Adrenal gland (tissue), 19 donors: ENCODE measurements at regions of chr6 and their contacts with region 1.

Region 1: GRCh38 chr6:127302728-127303660 is 36.3 kb downstream of the RNF146 start:
- DNase-seq: peak; percentile 15 to 69 (median 28)
- H3K4me3 ChIP-seq: no peak overlapping the region
- H3K27ac ChIP-seq: no peak overlapping the region
- H3K4me1 ChIP-seq: peaks cover 0 to 10% of the 10 kb centered on the region in 2 donors
- H3K27me3 ChIP-seq: no peaks in the 10 kb centered on the region
- CTCF ChIP-seq: peak; percentile 49 to 75 (median 70)
- POLR2A ChIP-seq: no peak

Region 2: GRCh38 chr6:127547215-127547614 is 244.2 kb after region 1 on chr6:
- intact Hi-C with region 1: loop called (anchors 10 kb)
- DNase-seq: no peak
- H3K4me3 ChIP-seq: no peak overlapping the region
- H3K27ac ChIP-seq: no peak overlapping the region
- H3K4me1 ChIP-seq: no peaks in the 10 kb centered on the region
- H3K27me3 ChIP-seq: peaks cover 15% of the 10 kb centered on the region
- CTCF ChIP-seq: peak in 3 of 6 experiments; percentile 6 to 27 (median 7)
- POLR2A ChIP-seq: no peak

Region 3: DNA sequence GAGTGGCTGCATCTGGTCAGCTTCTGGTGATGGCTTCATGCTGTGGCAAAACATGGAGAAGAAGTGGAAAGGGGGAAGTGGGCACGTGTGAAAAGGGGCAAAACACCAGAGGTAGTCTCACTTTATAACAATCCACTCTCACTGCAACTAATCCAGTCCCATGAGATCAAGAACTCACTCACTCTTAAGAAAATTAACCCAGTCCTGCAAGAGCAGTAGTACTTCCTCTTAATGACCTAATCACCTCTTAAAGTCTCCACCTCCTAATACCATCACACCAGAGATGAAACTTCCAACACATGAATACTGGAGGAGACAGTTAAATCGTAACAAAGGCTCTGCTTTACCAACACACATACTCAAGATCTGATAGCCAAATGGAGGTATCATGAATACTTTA is 445.3 kb after region 1 on chr6:
- intact Hi-C with region 1: no loop called
- DNase-seq: no peak
- H3K4me3 ChIP-seq: no peak overlapping the region
- H3K27ac ChIP-seq: no peak overlapping the region
- H3K4me1 ChIP-seq: no peaks in the 10 kb centered on the region
- H3K27me3 ChIP-seq: no peaks in the 10 kb centered on the region
- CTCF ChIP-seq: no peak
- POLR2A ChIP-seq: no peak